ENCODE measurements at regions of chr1 and their contacts with region 1.

Region 1: GRCh38 chr1:21552715-21553114 is 43.5 kb downstream of the ALPL start:
- DNase-seq: no peak
- H3K4me3 ChIP-seq: no peak overlapping the region
- H3K27ac ChIP-seq: no peak overlapping the region
- H3K4me1 ChIP-seq: peaks cover 3 to 23% (median 12%) of the 10 kb centered on the region in 4 experiments
- H3K27me3 ChIP-seq: no peaks in the 10 kb centered on the region
- CTCF ChIP-seq: no peak
- EP300 ChIP-seq: no peak
- POLR2A ChIP-seq: no peak
- RAD21 ChIP-seq: no peak

Region 2: GRCh38 chr1:21534674-21535378 is 17.9 kb before region 1 on chr1:
- CTCF ChIA-PET with region 1: interaction called, 85 read pairs
- POLR2A ChIA-PET with region 1: interaction called, 3 read pairs
- DNase-seq: no peak
- H3K4me3 ChIP-seq: no peak overlapping the region
- H3K27ac ChIP-seq: no peak overlapping the region
- H3K4me1 ChIP-seq: peaks cover 15 to 21% (median 18%) of the 10 kb centered on the region in 4 experiments
- H3K27me3 ChIP-seq: no peaks in the 10 kb centered on the region
- CTCF ChIP-seq: peak; percentile 43 to 71 (median 64)
- EP300 ChIP-seq: no peak
- POLR2A ChIP-seq: no peak
- RAD21 ChIP-seq: peak; percentile 49 to 73

Region 3: GRCh38 chr1:21539933-21540332 is 12.8 kb before region 1 on chr1:
- CTCF ChIA-PET with region 1: interaction called, 85 read pairs
- POLR2A ChIA-PET with region 1: interaction called, 4 read pairs
- DNase-seq: peak in 1 of 2 experiments; percentile 87
- H3K4me3 ChIP-seq: no peak overlapping the region
- H3K27ac ChIP-seq: no peak overlapping the region
- H3K4me1 ChIP-seq: peaks cover 10 to 24% (median 16%) of the 10 kb centered on the region in 4 experiments
- H3K27me3 ChIP-seq: no peaks in the 10 kb centered on the region
- CTCF ChIP-seq: peak; percentile 62 to 87 (median 79)
- EP300 ChIP-seq: no peak
- POLR2A ChIP-seq: no peak
- RAD21 ChIP-seq: peak; percentile 20 to 55; a peak in 3 of 4 replicates

Region 4: GRCh38 chr1:21721295-21721985 is 168.7 kb after region 1 on chr1:
- CTCF ChIA-PET with region 1: no interaction called
- POLR2A ChIA-PET with region 1: no interaction called
- DNase-seq: no peak
- H3K4me3 ChIP-seq: no peak overlapping the region
- H3K27ac ChIP-seq: no peak overlapping the region
- H3K4me1 ChIP-seq: no peaks in the 10 kb centered on the region
- H3K27me3 ChIP-seq: no peaks in the 10 kb centered on the region
- CTCF ChIP-seq: no peak
- EP300 ChIP-seq: no peak
- POLR2A ChIP-seq: no peak
- RAD21 ChIP-seq: no peak

Region 5: DNA sequence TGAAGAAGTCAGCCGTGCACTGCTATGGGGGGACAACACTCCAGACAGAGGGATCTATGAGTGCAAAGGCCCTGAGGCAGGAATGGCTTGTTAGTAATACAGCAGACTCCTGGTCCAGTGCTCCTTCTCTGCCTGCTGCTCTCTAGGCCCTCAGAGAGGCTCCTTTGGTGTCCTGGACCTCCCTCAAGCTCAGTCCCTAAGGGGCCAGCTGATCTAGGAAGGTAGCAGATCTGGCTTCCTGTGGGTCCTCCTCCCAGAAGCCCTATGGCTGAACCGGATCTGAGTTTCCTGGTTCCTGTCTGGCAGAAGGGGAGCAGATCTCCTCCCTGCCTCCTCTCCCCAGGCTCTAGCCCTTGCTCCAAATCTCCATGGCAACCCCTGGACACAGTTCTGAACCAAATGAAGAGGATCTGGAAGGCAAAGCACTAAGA is 259.2 kb after region 1 on chr1 and contains the start of gene LDLRAD2:
- CTCF ChIA-PET with region 1: no interaction called
- POLR2A ChIA-PET with region 1: no interaction called
- DNase-seq: no peak
- H3K4me3 ChIP-seq: no peak within 1 kb of the TSS
- H3K27ac ChIP-seq: no peak within 1 kb of the TSS
- H3K4me1 ChIP-seq: peaks cover 0 to 7% (median 2%) of the 10 kb centered on the region in 4 experiments; a peak in 3 of 7 replicates
- H3K27me3 ChIP-seq: no peaks in the 10 kb centered on the region; a peak in 2 of 7 replicates
- CTCF ChIP-seq: no peak
- EP300 ChIP-seq: no peak
- POLR2A ChIP-seq: no peak
- RAD21 ChIP-seq: no peak
- total RNA-seq, gene LDLRAD2: 0.74 and 0.94 TPM in 2 replicates